IMR-90 (cell line): ENCODE measurements at regions of chr16 and their contacts with region 1.

Region 1: DNA sequence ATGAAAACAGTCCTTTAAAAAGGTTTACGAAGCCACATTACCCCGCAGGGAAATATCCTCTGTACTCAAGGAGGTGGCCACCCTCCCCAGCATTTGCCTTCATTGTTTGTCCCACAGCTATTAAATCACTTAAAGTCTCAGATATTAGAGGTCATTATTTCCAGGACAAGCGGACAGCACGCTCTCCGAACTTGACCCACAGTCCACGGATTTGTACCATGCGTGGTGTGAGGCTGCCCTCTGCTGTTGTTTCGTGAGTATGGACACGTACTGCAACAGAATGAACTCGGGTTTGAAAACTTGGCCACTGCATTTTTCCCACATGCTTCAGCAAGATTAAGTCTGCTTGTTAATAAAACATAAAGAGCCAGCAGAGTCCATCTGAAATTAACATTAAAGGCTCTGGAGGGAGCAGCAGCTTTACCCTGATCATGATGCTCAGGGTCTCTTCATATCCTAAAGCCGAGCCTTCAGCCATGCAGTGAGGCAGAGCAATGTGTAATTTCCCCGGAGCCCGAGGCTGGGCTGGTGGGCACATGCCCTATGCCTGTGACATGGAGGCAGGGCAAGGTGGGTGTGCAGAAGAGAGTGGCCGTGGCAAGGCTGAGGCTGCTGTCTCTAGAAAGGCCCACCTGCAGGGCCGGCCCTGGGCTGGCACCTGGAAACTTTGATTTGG is 19.7 kb downstream of the MEAK7 start:
- DNase-seq: peak; percentile 74
- ATAC-seq: peak; percentile 94
- H3K4me3 ChIP-seq: no peak overlapping the region
- H3K27ac ChIP-seq: no peak overlapping the region
- H3K4me1 ChIP-seq: no peaks in the 10 kb centered on the region; the same call in 1 of the 2 replicates
- H3K27me3 ChIP-seq: no peaks in the 10 kb centered on the region
- CTCF ChIP-seq: peak; percentile 84
- POLR2A ChIP-seq: no peak
- RAD21 ChIP-seq: peak; percentile 95

Region 2: DNA sequence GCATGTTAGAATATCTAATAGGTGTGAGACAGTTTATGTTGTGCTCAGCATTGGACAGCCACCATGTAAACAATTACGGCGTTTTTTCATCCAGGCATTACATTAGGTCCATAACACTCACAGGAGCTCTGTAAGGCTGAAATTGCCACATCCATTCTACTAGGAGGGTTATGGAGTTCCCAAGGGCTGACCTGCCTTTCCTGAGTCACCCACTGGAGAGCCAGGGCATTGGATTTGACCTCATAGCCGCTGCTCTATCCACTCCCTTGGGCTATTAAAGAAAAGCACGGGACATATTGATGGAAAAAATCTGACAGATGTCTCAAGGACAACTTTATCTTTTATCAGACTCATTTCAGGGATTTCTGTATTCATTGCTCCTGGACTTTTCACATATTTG is 983.2 kb before region 1 on chr16:
- CTCF ChIA-PET with region 1: no interaction called
- POLR2A ChIA-PET with region 1: no interaction called
- dilution Hi-C with region 1: no loop called
- in situ Hi-C with region 1: no loop called
- intact Hi-C with region 1: no loop called
- DNase-seq: no peak
- ATAC-seq: no peak
- H3K4me3 ChIP-seq: no peak overlapping the region
- H3K27ac ChIP-seq: no peak overlapping the region
- H3K4me1 ChIP-seq: no peaks in the 10 kb centered on the region
- H3K27me3 ChIP-seq: no peaks in the 10 kb centered on the region
- CTCF ChIP-seq: no peak
- POLR2A ChIP-seq: no peak
- RAD21 ChIP-seq: no peak

Region 3: GRCh38 chr16:83952940-83953795 is 531.5 kb before region 1 on chr16 and contains the start of gene OSGIN1:
- CTCF ChIA-PET with region 1: no interaction called
- POLR2A ChIA-PET with region 1: no interaction called
- dilution Hi-C with region 1: no loop called
- in situ Hi-C with region 1: loop called (anchors 25 kb)
- intact Hi-C with region 1: no loop called
- DNase-seq: peak; percentile 93
- ATAC-seq: peak; percentile 86
- H3K4me3 ChIP-seq: peak within 1 kb of the TSS; percentile 54
- H3K27ac ChIP-seq: peak within 1 kb of the TSS; percentile 79
- H3K4me1 ChIP-seq: peaks cover 14% of the 10 kb centered on the region
- H3K27me3 ChIP-seq: no peaks in the 10 kb centered on the region
- CTCF ChIP-seq: no peak
- POLR2A ChIP-seq: peak; percentile 94
- RAD21 ChIP-seq: no peak
- total RNA-seq, gene OSGIN1: 0.83 and 0.90 TPM in 2 replicates

Region 4: GRCh38 chr16:84084570-84085270 is 400.0 kb before region 1 on chr16:
- CTCF ChIA-PET with region 1: no interaction called
- POLR2A ChIA-PET with region 1: no interaction called
- dilution Hi-C with region 1: no loop called
- in situ Hi-C with region 1: loop called (anchors 10 kb)
- intact Hi-C with region 1: no loop called
- DNase-seq: peak; percentile 65
- ATAC-seq: peak; percentile 84
- H3K4me3 ChIP-seq: no peak overlapping the region
- H3K27ac ChIP-seq: no peak overlapping the region
- H3K4me1 ChIP-seq: no peaks in the 10 kb centered on the region
- H3K27me3 ChIP-seq: no peaks in the 10 kb centered on the region
- CTCF ChIP-seq: peak; percentile 64
- POLR2A ChIP-seq: no peak
- RAD21 ChIP-seq: peak; percentile 68

Region 5: GRCh38 chr16:84116720-84117493 is 367.8 kb before region 1 on chr16 and contains the start of gene MBTPS1:
- CTCF ChIA-PET with region 1: no interaction called
- POLR2A ChIA-PET with region 1: no interaction called
- dilution Hi-C with region 1: no loop called
- in situ Hi-C with region 1: no loop called
- intact Hi-C with region 1: loop called (anchors 10 kb)
- DNase-seq: peak; percentile 97
- ATAC-seq: peak; percentile 96
- H3K4me3 ChIP-seq: peak within 1 kb of the TSS; percentile 85
- H3K27ac ChIP-seq: peak within 1 kb of the TSS; percentile 95
- H3K4me1 ChIP-seq: no peaks in the 10 kb centered on the region
- H3K27me3 ChIP-seq: no peaks in the 10 kb centered on the region
- CTCF ChIP-seq: no peak
- POLR2A ChIP-seq: peak; percentile 83
- RAD21 ChIP-seq: no peak
- total RNA-seq, gene MBTPS1: 70.3 and 70.4 TPM in 2 replicates